AG04449 (cell line): ENCODE measurements at regions of chr1 and their contacts with region 1.

Region 1: DNA sequence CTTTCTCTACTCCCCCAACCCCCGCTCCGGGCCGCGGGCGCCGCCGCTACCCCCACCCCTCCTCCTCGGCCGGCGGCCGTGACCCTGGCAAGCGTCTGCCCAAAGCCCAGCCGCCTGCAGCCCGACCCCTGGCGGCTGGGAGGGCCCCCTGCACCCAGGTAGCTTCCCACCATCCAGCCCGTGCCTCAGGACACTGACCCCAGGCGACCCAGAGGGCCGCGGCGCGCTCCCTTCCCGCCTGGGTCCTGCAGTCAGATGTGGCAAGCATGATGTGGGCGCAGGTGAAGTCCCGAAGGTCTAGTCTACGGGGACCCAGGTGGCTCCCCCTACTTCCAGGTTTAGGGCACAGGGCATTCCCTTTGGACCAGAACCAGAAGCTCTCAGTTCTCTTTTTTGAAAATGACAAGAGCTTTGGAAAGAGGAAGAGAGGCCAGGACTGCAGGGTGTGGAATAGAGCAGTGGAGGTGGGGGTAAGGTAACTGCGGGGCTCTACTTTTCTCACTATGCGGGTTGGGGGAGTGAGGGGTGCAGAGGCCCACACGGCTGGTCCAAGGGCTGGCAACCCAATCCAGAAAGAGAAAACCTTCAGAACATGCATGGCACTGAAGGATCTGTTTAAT is at the start of gene DENND4B:
- DNase-seq: no peak
- H3K4me3 ChIP-seq: peak within 1 kb of the TSS; percentile 77
- CTCF ChIP-seq: peak; percentile 98

Region 2: GRCh38 chr1:153796791-153797659 is 149.7 kb before region 1 on chr1:
- CTCF ChIA-PET with region 1: interaction called, 20 read pairs
- POLR2A ChIA-PET with region 1: no interaction called
- DNase-seq: no peak
- H3K4me3 ChIP-seq: no peak overlapping the region
- CTCF ChIP-seq: peak; percentile 77

Region 3: DNA sequence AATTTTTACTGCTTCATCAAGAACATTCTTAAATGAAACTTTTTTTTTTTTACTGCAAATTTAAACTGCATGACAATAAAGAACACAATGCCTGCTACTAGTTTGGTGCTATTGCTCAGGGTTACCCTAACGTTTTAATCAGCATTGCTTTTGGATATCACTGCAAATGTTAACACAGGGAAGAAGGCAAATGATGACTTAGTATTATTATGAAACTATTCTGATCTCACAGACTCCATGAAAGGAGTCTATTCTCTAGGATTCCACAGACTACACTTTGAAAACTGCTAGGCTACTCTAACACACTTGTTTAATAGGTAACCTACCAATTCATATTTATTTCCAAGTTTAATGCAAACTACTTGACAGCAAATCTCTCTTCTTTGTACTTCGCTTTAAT is 73.8 kb before region 1 on chr1:
- CTCF ChIA-PET with region 1: no interaction called
- POLR2A ChIA-PET with region 1: no interaction called
- DNase-seq: no peak
- H3K4me3 ChIP-seq: no peak overlapping the region
- CTCF ChIP-seq: no peak

Region 4: DNA sequence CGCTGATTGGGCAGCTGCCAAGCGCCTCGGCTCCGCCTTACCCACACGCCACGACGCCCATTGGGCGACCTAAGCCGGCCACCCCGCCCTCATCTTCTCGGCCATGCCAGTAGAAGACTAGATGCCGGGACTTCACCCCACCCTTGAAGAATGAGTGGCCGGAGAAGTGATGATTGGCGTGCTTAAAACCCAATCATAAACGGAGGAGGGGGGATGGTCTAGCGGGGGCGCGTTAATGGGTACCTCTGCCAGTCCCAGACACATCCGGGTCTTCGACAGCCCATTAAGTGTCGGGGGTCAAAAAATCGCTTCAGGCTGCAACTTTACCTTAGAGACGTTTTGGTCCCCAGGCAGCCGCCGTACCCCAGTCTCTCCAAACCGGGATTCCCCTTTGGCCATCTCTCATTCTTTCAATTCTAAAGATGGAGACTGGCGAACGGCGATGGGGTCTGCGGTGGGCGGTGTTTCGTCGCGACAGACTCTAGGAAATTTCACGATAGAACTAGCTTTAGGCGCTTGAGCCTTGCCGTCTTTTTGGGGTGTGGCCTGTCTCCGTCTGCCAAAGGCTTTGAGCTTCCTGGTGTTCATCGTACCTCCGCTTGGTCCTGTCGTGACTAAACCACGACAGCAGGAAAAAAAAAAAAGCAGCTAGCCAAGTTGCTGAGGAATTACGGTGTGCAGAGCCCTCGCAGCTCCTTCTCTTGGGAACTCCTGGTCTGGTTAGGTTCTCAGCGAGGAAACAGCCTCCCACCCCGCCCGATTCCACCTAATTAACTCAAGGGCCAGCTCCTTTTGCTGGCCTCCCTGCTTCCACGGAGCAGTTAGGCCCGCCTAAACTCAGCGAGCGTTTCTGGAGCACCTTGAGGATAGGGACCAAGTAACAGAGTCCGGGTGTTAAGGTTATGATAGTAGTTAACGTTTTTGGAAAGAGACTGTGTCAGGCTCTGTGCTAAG is 23.5 kb before region 1 on chr1 and contains the start of gene GATAD2B:
- CTCF ChIA-PET with region 1: interaction called, 34 read pairs
- POLR2A ChIA-PET with region 1: interaction called, 13 read pairs
- DNase-seq: peak; percentile 100
- H3K4me3 ChIP-seq: peak within 1 kb of the TSS; percentile 96
- CTCF ChIP-seq: no peak

Region 5: GRCh38 chr1:153958111-153958960 is 11.6 kb after region 1 on chr1 and contains the start of gene CRTC2:
- CTCF ChIA-PET with region 1: interaction called, 83 read pairs
- POLR2A ChIA-PET with region 1: interaction called, 18 read pairs
- DNase-seq: peak; percentile 85
- H3K4me3 ChIP-seq: peak within 1 kb of the TSS; percentile 94
- CTCF ChIP-seq: peak; percentile 2

Region 6: DNA sequence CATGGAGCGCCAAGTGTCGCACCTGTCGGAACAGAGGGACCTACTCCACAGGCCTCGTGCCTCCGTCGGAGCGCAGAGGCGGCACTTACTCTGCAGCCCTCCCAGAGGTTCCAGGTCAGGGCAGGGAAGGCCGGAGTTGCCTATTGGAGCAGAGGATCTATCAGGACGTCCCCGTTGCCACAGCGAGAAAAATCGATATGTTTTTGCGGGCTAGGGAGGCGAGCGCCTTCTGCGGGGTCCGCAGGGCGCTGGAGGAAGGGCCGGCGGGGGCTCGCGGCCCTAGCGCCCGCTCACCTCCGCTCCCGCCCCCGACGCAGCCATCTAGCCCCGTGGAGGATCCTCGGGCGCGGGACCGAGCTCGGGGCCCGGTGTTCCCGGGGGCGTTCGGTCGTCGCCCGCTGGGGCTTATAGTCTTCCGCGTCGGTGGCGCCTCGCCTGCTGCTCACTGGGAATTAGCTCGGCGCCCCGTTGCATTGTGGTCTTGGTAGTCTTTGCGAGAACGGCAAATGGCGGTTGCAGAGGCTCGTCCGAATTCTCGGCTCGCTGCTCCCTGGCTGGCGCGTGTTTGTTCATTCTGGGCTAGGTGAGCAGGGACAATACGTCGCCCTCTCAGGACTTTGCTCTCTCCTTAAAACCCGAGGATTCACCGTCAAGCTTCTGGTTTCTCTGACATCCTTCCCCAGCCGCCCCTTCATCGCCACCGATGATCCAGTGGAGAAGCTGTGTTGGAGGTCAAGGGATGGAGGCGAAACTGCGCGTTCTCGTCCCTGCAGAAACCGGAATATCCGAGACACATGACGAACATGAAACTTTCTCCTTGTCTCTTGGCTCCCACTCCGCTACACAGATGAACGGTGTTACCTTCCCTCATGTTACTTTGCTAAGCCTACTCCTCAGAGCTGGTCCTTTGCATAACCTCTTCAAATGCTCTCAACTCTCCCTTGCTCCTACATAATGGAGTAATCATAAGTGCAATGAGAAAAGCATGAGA is 30.8 kb after region 1 on chr1 and contains the start of gene JTB:
- CTCF ChIA-PET with region 1: interaction called, 18 read pairs
- POLR2A ChIA-PET with region 1: interaction called, 3 read pairs
- DNase-seq: no peak
- H3K4me3 ChIP-seq: peak within 1 kb of the TSS; percentile 98
- CTCF ChIP-seq: no peak